MCF 10A (cell line): ENCODE measurements at regions of chr5 and their contacts with region 1.

Region 1: GRCh38 chr5:73693481-73694061 is 67.6 kb downstream of the ARHGEF28 start:
- DNase-seq: peak; percentile 30
- H3K4me3 Mint-ChIP-seq: no peak overlapping the region
- H3K27ac Mint-ChIP-seq: peak overlapping the region; percentile 79
- H3K4me1 Mint-ChIP-seq: peaks cover 29% of the 10 kb centered on the region
- H3K27me3 Mint-ChIP-seq: no peaks in the 10 kb centered on the region
- CTCF ChIP-seq: peak; percentile 29

Region 2: DNA sequence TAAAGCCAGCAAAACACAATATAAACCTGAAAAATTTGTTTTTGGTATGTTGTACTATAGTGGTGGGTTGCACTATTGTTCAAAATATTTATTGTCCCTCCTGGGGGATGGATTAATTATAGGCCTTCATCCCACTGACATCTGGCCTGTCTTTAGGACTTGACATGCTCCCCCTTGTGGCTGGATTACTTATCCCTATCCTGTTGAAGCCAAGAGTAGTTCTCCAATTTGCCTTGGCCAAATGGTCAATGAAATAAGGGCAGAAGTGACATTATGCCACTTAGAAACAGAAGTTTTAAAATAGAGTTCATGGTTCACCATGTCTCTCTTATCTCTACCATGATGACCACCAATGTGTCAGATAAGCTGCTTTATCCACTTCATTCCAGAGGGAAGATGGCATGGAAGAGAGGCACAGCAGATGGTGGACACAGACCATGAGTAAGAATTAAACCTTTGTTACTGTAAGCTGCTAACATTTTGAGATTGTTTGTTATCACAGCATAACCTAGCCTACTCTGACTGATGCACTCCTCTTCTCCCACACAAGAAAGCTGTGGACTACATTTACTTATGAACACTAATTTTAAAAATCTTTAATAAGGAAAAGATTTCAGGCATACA is 96.8 kb before region 1 on chr5:
- CTCF ChIA-PET with region 1: interaction called, 107 read pairs
- POLR2A ChIA-PET with region 1: interaction called, 4 read pairs
- intact Hi-C with region 1: no loop called
- DNase-seq: peak; percentile 63
- H3K4me3 Mint-ChIP-seq: no peak overlapping the region
- H3K27ac Mint-ChIP-seq: no peak overlapping the region
- H3K4me1 Mint-ChIP-seq: peaks cover 13% of the 10 kb centered on the region
- H3K27me3 Mint-ChIP-seq: no peaks in the 10 kb centered on the region
- CTCF ChIP-seq: peak; percentile 53

Region 3: DNA sequence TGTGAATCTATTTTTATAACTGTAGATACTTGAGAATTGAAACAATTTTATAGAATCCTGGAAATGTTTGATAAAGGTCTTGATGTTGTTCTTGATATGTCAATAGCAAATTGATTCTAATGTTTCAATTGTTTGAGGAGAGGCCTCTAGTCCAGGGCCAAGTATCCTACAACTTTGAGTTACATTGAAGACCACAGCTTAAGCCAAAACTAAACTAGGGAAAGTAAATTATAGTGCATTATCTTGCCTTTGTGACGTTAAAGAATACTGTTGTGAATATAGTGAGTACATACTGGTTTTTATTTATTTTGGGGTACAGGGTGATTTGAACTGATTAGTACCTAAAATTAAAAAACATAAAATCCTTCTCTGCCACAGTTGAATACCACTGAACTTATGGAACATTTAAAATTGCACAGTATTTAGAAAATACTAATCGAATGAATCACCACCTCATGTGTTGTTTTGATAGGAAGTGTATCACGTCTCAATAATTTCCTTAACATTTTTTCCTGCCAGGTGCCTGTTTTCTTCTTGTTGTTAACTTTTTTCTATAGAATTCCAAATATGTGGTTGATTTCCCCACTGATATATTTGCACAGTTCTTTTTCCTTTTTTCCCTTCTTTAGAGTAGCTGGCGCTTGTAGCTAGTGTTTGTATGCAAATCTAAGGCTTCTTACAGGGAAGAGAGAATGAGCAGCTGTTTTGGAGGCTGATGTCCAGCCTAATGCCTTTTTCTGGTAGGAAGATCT is 55.1 kb before region 1 on chr5:
- CTCF ChIA-PET with region 1: interaction called, 10 read pairs
- POLR2A ChIA-PET with region 1: interaction called, 3 read pairs
- intact Hi-C with region 1: no loop called
- DNase-seq: peak; percentile 52
- H3K4me3 Mint-ChIP-seq: peak overlapping the region; percentile 33
- H3K27ac Mint-ChIP-seq: peak overlapping the region; percentile 87
- H3K4me1 Mint-ChIP-seq: peaks cover 45% of the 10 kb centered on the region
- H3K27me3 Mint-ChIP-seq: no peaks in the 10 kb centered on the region
- CTCF ChIP-seq: no peak

Region 4: DNA sequence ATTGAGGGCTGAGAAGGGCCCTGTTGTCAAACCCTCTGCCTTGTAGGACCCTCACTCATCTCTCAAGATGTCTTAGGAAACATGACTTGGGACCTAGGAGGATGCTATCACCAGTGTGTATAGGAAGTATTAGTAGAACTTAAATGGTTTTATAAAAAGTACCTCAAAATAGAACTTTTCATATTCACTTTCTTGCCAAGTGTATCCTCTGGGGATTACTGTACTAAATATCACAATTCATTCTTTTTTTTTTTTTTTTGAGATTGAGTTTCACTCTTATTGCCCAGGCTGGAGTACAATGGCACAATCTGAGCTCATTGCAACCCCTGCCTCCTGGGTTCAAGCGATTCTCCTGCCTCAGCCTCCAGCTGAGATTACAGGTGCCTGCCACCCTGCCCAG is 11.4 kb before region 1 on chr5:
- CTCF ChIA-PET with region 1: interaction called, 16 read pairs
- POLR2A ChIA-PET with region 1: interaction called, 3 read pairs
- intact Hi-C with region 1: no loop called
- DNase-seq: no peak
- H3K4me3 Mint-ChIP-seq: no peak overlapping the region
- H3K27ac Mint-ChIP-seq: no peak overlapping the region
- H3K4me1 Mint-ChIP-seq: peaks cover 7% of the 10 kb centered on the region
- H3K27me3 Mint-ChIP-seq: no peaks in the 10 kb centered on the region
- CTCF ChIP-seq: no peak

Region 5: GRCh38 chr5:73783828-73784227 is 90.3 kb after region 1 on chr5:
- CTCF ChIA-PET with region 1: interaction called, 11 read pairs
- POLR2A ChIA-PET with region 1: no interaction called
- intact Hi-C with region 1: no loop called
- DNase-seq: no peak
- H3K4me3 Mint-ChIP-seq: no peak overlapping the region
- H3K27ac Mint-ChIP-seq: peak overlapping the region; percentile 3
- H3K4me1 Mint-ChIP-seq: peaks cover 13% of the 10 kb centered on the region
- H3K27me3 Mint-ChIP-seq: no peaks in the 10 kb centered on the region
- CTCF ChIP-seq: peak; percentile 30